ENCODE measurements at regions of chr1 and their contacts with region 1.

Region 1: DNA sequence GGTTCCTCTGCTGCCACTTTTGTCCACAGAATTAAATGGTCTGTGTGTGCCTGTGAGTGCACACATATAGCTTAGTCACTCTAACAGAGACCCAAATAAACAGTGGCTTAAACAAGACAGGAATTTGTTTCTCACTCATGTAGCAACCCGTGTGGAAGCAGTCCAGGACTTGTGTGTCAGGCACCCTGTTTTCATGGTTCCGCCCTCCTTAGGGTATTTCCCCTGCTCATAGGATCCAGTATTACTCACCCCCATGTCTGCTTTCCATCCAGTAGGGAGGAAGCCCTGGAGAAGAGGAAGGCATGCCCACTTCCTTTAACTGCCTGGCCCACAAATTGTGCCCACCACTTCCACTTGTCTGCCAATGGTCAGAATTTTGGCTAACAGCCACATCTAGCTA is 41.3 kb upstream of the TACSTD2 start:
- DNase-seq: peak; percentile 99
- H3K4me3 ChIP-seq: no peak overlapping the region
- H3K27ac ChIP-seq: peak overlapping the region; percentile 84
- H3K4me1 ChIP-seq: peaks cover 24% of the 10 kb centered on the region
- H3K27me3 ChIP-seq: no peaks in the 10 kb centered on the region
- CTCF ChIP-seq: no peak

Region 2: DNA sequence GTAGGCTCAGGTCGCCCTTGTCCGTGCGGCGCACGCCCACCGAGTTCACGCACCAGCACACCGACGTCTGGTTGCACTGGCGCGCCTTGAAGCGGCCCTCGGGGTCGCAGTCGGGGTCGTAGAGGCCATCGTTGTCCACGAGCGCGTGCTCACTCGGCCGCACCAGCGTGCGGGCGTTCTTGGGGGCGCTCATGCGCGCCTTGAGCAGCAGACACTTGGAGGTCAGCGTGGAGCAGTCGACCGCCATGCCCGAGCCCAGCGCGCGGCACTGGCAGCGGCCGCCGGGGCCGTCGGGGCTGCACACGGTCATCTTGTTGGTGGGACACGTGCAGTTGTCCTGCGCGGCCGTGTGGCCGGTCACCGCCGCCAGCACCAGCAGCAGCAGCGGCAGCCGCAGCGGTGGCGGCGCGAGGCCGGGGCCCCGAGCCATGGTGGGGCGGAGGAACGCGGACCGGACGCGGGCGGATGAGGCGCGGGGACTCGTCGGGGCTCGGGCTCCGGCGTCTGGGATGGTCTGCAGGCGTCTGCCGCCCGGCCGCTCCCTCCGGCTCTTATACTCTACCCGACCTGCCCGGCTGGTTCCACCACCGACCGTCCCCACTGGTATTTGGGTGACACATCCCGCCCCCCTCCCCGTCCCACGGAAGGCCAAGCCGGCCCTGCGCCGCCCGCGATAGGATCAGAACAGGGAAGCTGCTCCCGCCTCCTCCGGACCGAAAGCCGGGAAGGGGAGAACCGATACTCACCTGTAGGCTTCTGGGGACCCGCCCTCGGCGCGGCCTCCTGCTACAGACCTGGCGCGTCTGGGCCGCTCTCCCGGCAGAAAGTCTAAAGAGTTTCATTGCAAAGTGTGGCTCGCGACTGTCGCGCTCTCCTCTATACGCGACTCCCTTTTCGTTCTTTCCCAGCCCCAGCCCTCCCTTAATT is 41.3 kb before region 1 on chr1 and contains the start of gene TACSTD2:
- CTCF ChIA-PET with region 1: no interaction called
- dilution Hi-C with region 1: loop called (anchors 5 kb)
- in situ Hi-C with region 1: no loop called
- intact Hi-C with region 1: loop called (anchors 2 kb)
- DNase-seq: peak; percentile 99
- H3K4me3 ChIP-seq: peak within 1 kb of the TSS; percentile 65 to 93 (median 82)
- H3K27ac ChIP-seq: peak within 1 kb of the TSS; percentile 99
- H3K4me1 ChIP-seq: peaks cover 46% of the 10 kb centered on the region
- H3K27me3 ChIP-seq: no peaks in the 10 kb centered on the region
- CTCF ChIP-seq: no peak
- total RNA-seq, gene TACSTD2: 231 to 244 TPM

Region 3: DNA sequence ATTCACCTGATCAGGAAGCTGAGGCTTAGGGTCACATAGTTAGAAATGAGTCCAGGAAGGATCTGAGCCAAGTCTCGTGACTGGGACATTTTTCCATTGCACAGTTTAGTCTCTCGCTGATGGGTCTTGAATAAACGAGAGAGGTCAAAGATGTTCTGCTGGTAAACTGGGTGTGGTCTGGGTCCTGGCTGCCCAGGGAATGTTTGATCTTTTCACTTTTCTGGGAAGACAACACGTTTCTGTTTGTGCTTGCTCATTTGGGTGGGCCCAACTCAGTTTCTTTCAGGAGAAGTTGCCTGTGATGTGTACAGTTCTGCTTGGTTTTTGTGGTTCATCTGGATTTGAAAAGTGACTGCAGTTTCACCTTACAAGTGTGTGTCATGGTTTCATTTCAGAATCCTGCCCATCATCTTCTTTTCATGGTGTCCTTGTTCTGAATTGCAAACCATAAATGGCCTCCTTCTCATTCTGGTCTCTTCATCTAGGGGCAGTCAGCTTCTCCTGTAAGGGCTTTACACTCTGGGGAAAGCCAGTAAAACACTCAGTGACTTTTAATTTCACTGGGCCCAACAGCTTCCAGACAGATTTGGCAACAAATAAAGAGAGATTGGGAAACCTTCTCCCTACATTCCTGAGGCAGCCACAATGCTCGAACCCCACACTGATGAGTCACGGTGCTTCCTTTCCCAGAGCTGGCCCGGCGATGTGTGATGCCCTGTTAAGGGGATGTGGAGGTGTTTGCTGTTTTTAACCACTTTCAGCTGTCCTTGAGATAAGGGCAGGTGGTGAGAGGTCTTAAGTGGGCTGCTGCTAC is 34.0 kb before region 1 on chr1:
- CTCF ChIA-PET with region 1: no interaction called
- dilution Hi-C with region 1: loop called (anchors 5 kb)
- in situ Hi-C with region 1: no loop called
- intact Hi-C with region 1: loop called (anchors 2 kb)
- DNase-seq: peak; percentile 98
- H3K4me3 ChIP-seq: peak overlapping the region in 2 of 3 experiments; percentile 12 to 14
- H3K27ac ChIP-seq: peak overlapping the region; percentile 97
- H3K4me1 ChIP-seq: peaks cover 38% of the 10 kb centered on the region
- H3K27me3 ChIP-seq: no peaks in the 10 kb centered on the region
- CTCF ChIP-seq: no peak

Region 4: GRCh38 chr1:58592529-58593134 is 25.7 kb before region 1 on chr1:
- CTCF ChIA-PET with region 1: no interaction called
- dilution Hi-C with region 1: no loop called
- in situ Hi-C with region 1: no loop called
- intact Hi-C with region 1: loop called (anchors 2 kb)
- DNase-seq: peak; percentile 94
- H3K4me3 ChIP-seq: no peak overlapping the region
- H3K27ac ChIP-seq: peak overlapping the region; percentile 61
- H3K4me1 ChIP-seq: peaks cover 27% of the 10 kb centered on the region
- H3K27me3 ChIP-seq: no peaks in the 10 kb centered on the region
- CTCF ChIP-seq: no peak